PC-3 (cell line): ENCODE measurements at regions of chr2 and their contacts with region 1.

Region 1: DNA sequence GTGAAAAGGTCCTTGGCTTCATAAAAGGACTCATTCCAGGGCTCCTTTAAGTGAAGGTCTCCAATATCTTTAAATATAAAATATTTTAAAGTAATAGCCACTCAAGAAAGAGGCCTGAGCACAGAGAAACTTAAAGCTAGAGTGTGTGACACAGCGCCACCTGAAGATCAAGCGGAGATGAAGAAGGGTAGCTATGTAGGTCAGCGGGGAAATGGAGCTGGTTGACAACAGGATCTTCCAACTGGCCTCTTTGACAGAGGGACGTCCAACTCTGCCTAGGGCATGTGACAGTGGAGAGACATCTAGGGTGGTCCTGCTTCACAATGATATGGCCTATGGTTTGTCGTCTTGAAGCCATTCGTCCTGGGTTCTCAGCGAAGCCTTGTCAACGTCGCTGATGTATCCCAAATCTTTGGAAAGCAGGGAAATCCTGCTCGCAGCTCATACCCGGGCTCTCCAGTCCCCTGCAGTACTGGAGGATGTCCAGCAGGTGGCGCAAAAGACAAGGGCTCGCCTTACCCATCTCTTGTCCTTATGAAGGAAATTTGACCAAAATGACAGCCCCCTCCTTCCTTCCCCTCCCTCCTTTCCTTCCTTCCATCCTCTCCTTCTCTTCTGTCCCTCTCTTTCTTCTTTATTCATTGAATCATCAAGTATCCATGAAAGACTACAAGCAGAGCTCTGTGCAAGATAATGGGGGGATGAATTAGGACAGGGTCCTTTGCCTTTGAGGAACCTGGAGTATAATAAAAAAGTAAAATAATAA is 59.6 kb downstream of the LONRF2 start:
- DNase-seq: peak; percentile 80
- ATAC-seq: peak; percentile 81
- H3K4me3 ChIP-seq: no peak overlapping the region
- H3K27ac ChIP-seq: no peak overlapping the region
- H3K4me1 ChIP-seq: no peaks in the 10 kb centered on the region
- H3K27me3 ChIP-seq: no peaks in the 10 kb centered on the region
- CTCF ChIP-seq: peak; percentile 94

Region 2: GRCh38 chr2:100339823-100340222 is 77.1 kb after region 1 on chr2:
- CTCF ChIA-PET with region 1: interaction called, 10 read pairs
- POLR2A ChIA-PET with region 1: no interaction called
- intact Hi-C with region 1: no loop called
- DNase-seq: no peak
- ATAC-seq: no peak
- H3K4me3 ChIP-seq: no peak overlapping the region
- H3K27ac ChIP-seq: no peak overlapping the region
- H3K4me1 ChIP-seq: no peaks in the 10 kb centered on the region
- H3K27me3 ChIP-seq: 0 out of 2 replicates have a peak, but pooled peaks cover 2% of the 10 kb centered on the region
- CTCF ChIP-seq: no peak

Region 3: GRCh38 chr2:100381240-100381639 is 118.5 kb after region 1 on chr2:
- CTCF ChIA-PET with region 1: interaction called, 51 read pairs
- POLR2A ChIA-PET with region 1: interaction called, 4 read pairs
- intact Hi-C with region 1: loop called (anchors 1 kb)
- DNase-seq: peak; percentile 88
- ATAC-seq: peak; percentile 83
- H3K4me3 ChIP-seq: no peak overlapping the region
- H3K27ac ChIP-seq: no peak overlapping the region
- H3K4me1 ChIP-seq: no peaks in the 10 kb centered on the region
- H3K27me3 ChIP-seq: no peaks in the 10 kb centered on the region
- CTCF ChIP-seq: peak; percentile 92

Region 4: GRCh38 chr2:100422320-100423055 is 159.8 kb after region 1 on chr2:
- CTCF ChIA-PET with region 1: interaction called, 3 read pairs
- POLR2A ChIA-PET with region 1: no interaction called
- intact Hi-C with region 1: loop called (anchors 5 kb)
- DNase-seq: peak; percentile 63
- ATAC-seq: peak; percentile 91
- H3K4me3 ChIP-seq: no peak overlapping the region
- H3K27ac ChIP-seq: no peak overlapping the region
- H3K4me1 ChIP-seq: peaks cover 10% of the 10 kb centered on the region
- H3K27me3 ChIP-seq: no peaks in the 10 kb centered on the region
- CTCF ChIP-seq: peak; percentile 67